ENCODE measurements at regions of chr1 and their contacts with region 1.

Region 1: GRCh38 chr1:59316497-59317128 is 19.7 kb downstream of the FGGY start:
- DNase-seq: no peak
- ATAC-seq: peak in 2 of 4 donors; percentile 26 to 45
- H3K4me3 ChIP-seq: peak overlapping the region; percentile 47
- H3K27ac ChIP-seq: peak overlapping the region; percentile 71
- H3K4me1 ChIP-seq: peaks cover 41% of the 10 kb centered on the region
- H3K27me3 ChIP-seq: no peaks in the 10 kb centered on the region
- CTCF ChIP-seq: no peak

Region 2: DNA sequence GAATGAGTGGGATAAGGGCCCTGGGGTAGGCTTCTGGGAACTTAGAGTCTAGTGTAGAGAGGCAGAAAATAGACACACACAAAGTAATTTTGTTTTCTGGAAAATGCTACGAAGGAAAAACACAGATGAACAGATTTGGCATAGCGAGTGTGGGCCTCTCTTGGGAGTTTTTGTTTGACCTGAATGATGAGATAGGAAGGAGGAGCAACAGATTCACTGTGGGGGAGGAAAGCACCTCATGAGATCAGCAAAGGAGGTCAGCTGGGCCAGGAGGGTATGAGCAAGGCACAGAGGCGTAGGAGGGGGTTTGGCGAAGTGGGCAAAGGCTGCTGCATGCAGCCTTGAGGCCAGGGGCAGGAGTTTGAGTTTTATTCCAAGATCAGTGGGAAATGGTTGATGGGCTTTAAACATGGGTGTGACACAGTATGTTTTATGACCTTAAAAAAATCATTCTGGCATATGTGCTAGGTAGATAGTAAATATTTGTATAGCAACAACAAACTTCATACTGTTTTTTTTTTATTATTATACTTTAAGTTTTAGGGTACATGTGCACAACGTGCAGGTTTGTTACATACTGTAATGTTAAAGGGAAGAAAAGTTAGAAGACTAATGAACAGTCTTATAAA is 38.2 kb after region 1 on chr1:
- intact Hi-C with region 1: loop called in 1 of 2 experiments (anchors 5 kb)
- DNase-seq: peak in 1 of 2 donors; percentile 37
- ATAC-seq: peak in 3 of 4 donors; percentile 37 to 52 (median 51)
- H3K4me3 ChIP-seq: no peak overlapping the region
- H3K27ac ChIP-seq: peak overlapping the region; percentile 42
- H3K4me1 ChIP-seq: peaks cover 17% of the 10 kb centered on the region
- H3K27me3 ChIP-seq: no peaks in the 10 kb centered on the region
- CTCF ChIP-seq: no peak

Region 3: DNA sequence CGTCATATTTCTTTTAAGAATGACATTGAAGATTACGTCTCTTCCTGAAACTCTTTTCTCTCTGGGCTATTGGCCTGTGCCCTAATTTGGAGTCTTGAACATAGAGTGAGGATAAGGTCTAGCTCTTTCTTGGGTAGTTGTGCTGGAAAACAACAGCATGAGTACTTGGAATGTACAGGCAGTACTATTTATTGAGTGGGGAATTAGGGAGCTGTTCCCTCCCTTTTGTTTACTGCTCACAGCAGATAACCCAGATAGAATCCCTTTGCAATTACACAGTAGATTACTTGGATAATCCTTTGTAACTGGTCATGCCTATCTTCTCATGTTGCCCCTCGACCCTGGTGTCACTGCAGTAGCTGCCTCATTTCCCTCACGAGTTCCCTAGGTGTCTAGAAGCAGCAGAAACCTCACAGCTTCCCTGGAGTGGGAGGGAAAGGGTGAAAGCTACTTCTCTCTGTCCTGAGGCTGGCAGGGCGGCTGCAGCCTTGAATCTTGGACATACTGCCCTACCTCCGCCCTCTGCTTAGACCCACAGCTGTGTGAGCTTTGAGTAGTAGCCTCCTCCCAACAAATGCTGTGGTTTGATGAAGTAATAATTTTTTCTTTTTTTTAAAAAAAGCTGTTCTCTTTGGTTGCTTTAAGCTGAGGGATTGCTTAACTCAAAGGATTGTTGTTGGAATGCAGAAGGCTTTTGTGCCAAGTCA is 50.8 kb after region 1 on chr1:
- intact Hi-C with region 1: no loop called
- DNase-seq: peak; percentile 65 to 81
- ATAC-seq: peak; percentile 80 to 92 (median 88)
- H3K4me3 ChIP-seq: no peak overlapping the region
- H3K27ac ChIP-seq: peak overlapping the region; percentile 69
- H3K4me1 ChIP-seq: peaks cover 19% of the 10 kb centered on the region
- H3K27me3 ChIP-seq: no peaks in the 10 kb centered on the region
- CTCF ChIP-seq: no peak

Region 4: DNA sequence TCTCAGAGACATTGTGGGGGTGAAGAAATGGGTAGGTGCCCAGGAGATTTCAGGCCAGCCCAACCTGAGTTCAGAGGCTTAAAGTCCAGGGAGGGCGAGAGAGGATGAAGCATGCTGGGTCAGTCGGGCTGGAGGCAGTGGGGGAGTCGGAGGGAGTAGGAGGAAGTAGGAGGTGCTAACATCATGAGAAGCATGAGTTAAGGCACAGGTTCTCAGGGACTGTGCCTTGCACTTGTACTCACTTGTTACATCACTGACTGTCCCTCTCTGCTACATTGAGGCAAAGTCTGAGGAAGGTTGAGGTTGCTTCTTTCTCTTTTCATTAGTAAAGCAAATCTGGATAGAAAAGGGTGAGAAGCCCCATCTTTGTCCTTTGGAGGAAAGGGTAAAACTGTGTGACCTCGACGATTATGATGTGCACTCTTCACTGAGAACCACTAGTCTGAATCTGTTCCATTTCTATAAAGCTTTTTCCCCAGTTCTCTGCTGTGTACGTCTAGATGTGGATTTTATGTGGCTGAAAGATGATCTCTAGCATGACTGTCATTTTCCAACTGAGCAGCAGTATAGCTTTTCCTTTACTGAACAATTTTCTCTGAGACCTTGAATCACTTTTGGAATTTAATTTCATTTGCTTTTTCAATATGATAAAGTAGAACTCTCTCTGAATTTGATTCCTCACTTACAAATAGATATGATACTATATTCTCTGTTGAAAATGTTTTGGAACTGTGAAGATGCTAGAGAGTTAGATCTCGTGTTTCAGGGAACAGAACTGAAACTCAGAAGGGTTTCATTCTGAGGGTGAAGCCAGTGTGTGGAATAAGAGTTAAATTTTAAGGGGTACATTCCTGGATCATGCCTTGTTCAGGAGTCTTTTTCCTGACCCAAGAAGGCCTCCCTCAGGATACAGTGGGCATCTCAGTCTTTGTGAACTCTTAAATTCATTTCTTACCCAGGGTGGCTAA is 74.9 kb after region 1 on chr1:
- intact Hi-C with region 1: no loop called
- DNase-seq: no peak
- ATAC-seq: peak in 3 of 4 donors; percentile 11 to 29 (median 16)
- H3K4me3 ChIP-seq: peak overlapping the region; percentile 24
- H3K27ac ChIP-seq: peak overlapping the region; percentile 93
- H3K4me1 ChIP-seq: peaks cover 53% of the 10 kb centered on the region
- H3K27me3 ChIP-seq: no peaks in the 10 kb centered on the region
- CTCF ChIP-seq: no peak

Measured in psoas muscle (tissue), 8 donors.